Activated CD4-positive, alpha-beta memory T cell treated with anti-CD3 and anti-CD28 coated beads for 36 hours (primary cell): ENCODE measurements at regions of chr2 and their contacts with region 1.

Region 1: GRCh38 chr2:201118121-201118960 is 2.4 kb downstream of the CFLAR start:
- DNase-seq: peak; percentile 93
- H3K4me3 Mint-ChIP-seq: peak overlapping the region; percentile 99
- H3K27ac Mint-ChIP-seq: peak overlapping the region; percentile 97
- H3K4me1 Mint-ChIP-seq: peaks cover 37% of the 10 kb centered on the region
- H3K27me3 Mint-ChIP-seq: no peaks in the 10 kb centered on the region

Region 2: DNA sequence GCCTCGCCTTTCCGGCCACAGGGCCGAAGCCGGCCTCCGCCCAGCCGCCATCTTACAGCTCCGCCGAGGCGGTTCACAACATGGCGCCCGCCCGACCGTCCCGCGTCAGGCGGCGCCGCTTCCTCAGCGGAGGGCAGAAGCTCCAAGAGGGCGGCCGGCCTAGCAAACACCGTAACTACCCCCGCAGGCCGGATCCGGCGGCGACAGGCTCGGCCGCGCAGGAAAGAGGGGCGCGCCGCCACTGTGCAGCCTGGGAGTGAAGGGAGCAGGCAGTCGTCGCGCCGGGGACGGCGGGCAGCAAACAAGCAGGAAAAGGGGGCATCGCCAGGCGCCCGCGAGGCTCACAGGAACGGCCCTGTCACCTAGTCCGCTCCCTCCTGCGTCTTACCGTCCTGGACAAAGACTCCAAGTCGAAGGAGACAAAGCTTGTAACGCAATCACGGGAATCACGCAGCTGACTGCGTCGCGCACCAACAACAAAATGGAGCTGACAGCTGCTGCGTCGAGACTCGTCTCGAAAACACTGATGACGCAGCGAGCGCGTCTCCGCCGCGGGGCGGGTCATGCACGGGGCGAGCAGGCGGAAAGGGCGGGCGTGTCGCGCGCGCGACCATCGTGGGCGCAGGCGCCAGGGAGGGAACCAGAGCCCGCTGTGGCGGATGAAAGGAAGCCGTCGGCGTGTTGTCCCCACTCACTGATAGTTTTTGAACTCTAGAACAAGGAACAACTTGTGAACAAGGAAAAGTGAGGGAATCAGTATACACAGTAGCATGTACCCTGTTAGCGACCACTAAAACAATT is 254.0 kb before region 1 on chr2 and contains the start of gene CLK1:
- CTCF ChIA-PET with region 1: no interaction called
- POLR2A ChIA-PET with region 1: interaction called, 49 read pairs
- intact Hi-C with region 1: loop called (anchors 2 kb)
- DNase-seq: peak; percentile 98
- H3K4me3 Mint-ChIP-seq: peak within 1 kb of the TSS; percentile 87
- H3K27ac Mint-ChIP-seq: peak within 1 kb of the TSS; percentile 100
- H3K4me1 Mint-ChIP-seq: peaks cover 36% of the 10 kb centered on the region
- H3K27me3 Mint-ChIP-seq: no peaks in the 10 kb centered on the region
- total RNA-seq, gene CLK1: 112 to 114 TPM

Region 3: DNA sequence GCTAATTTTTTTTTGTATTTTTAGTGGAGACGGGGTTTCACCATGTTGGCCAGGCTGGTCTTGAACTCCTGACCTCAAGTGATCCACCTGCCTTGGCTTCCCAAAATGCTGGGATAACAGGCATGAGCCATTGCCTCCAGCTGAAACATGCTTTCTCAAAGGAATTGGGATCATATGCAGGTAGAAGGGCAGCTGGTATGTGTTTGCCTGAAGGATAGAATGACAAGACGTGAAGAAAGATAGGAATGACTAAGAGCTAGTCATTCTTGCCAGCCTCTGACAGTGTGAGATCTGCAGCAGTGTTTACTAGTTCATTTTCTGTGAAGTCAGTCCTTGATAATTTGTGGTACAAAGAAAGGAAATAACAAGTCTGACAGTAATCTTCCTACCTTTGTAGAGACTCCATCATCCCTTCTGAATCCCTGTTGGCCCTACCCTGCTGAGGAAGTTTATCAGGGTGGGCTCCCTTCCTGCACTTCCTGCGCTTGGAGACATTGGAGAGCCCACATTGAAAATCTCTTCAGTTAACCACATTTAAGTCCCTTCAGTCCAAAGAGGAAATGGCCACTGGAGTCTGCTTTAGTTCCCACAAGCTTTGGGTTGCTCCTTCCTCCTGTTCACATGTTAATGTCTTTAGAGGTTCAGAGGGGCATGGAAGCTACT is 12.3 kb after region 1 on chr2:
- CTCF ChIA-PET with region 1: interaction called, 12 read pairs
- POLR2A ChIA-PET with region 1: interaction called, 3 read pairs
- intact Hi-C with region 1: loop called (anchors 1 kb)
- DNase-seq: peak; percentile 55
- H3K4me3 Mint-ChIP-seq: peak overlapping the region; percentile 92
- H3K27ac Mint-ChIP-seq: peak overlapping the region; percentile 94
- H3K4me1 Mint-ChIP-seq: peaks cover 54% of the 10 kb centered on the region
- H3K27me3 Mint-ChIP-seq: no peaks in the 10 kb centered on the region

Region 4: GRCh38 chr2:201151127-201151981 is 33.0 kb after region 1 on chr2:
- CTCF ChIA-PET with region 1: interaction called, 9 read pairs
- POLR2A ChIA-PET with region 1: interaction called, 4 read pairs
- intact Hi-C with region 1: loop called (anchors 2 kb)
- DNase-seq: no peak
- H3K4me3 Mint-ChIP-seq: peak overlapping the region; percentile 25
- H3K27ac Mint-ChIP-seq: peak overlapping the region; percentile 81
- H3K4me1 Mint-ChIP-seq: peaks cover 43% of the 10 kb centered on the region
- H3K27me3 Mint-ChIP-seq: no peaks in the 10 kb centered on the region

Region 5: GRCh38 chr2:201158111-201158929 is 40.0 kb after region 1 on chr2:
- CTCF ChIA-PET with region 1: interaction called, 7 read pairs
- POLR2A ChIA-PET with region 1: interaction called, 4 read pairs
- intact Hi-C with region 1: loop called (anchors 1 kb)
- DNase-seq: peak; percentile 50
- H3K4me3 Mint-ChIP-seq: no peak overlapping the region
- H3K27ac Mint-ChIP-seq: peak overlapping the region; percentile 75
- H3K4me1 Mint-ChIP-seq: peaks cover 26% of the 10 kb centered on the region
- H3K27me3 Mint-ChIP-seq: no peaks in the 10 kb centered on the region

Region 6: DNA sequence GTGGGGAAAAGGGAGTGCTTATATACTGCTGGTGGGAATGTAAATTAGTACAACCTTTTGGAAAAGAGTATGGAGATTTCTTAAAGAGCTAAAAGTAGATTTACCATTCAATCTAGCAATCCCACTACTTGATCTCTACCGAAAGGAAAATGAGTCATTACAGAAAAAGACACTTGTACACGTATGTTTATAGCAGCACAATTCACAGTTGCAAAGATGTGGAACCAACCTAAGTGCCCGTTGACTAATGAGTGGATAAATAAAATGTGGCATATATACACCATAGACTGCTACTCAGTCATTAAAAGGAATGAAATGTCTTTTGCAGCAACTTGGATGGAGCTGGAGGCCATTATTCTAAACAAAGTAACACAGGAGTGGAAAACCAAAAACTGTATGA is 209.3 kb after region 1 on chr2:
- CTCF ChIA-PET with region 1: no interaction called
- POLR2A ChIA-PET with region 1: no interaction called
- intact Hi-C with region 1: no loop called
- DNase-seq: no peak
- H3K4me3 Mint-ChIP-seq: no peak overlapping the region
- H3K27ac Mint-ChIP-seq: no peak overlapping the region
- H3K4me1 Mint-ChIP-seq: peaks cover 7% of the 10 kb centered on the region
- H3K27me3 Mint-ChIP-seq: no peaks in the 10 kb centered on the region

Region 7: DNA sequence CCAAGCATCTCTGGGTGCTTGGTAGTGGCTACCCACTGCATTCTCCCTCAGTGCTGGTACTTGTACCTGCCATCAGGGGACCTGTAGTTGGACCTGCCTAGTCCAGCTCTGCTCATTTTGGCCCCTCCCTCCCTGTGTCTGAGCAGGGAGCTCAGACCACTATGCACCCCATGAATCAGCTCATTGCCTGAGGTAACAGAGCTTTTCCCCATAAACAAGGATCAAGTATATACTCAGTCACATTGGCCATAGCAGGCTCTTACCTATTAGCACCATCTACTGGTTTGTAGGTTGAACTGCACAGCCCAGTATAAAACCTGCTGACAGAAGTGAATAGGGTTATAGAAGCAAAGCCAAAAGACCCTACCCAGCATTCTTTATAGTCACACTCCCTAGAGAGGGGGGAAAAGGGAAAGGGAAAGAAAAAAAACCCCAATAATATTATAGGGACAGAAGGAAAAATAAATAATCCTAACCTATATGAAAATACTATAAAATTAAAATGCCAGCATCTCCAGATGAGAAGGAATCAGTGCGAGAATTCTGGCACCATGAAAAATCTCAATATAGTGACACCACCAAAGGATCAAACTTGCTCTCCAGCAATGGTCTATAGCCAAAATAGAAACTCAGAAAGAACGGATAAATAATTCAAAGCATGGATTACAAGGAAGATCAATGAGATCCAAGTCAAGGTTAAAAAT is 245.7 kb after region 1 on chr2:
- CTCF ChIA-PET with region 1: no interaction called
- POLR2A ChIA-PET with region 1: no interaction called
- intact Hi-C with region 1: no loop called
- DNase-seq: peak; percentile 32
- H3K4me3 Mint-ChIP-seq: no peak overlapping the region
- H3K27ac Mint-ChIP-seq: no peak overlapping the region
- H3K4me1 Mint-ChIP-seq: peaks cover 24% of the 10 kb centered on the region
- H3K27me3 Mint-ChIP-seq: no peaks in the 10 kb centered on the region

Region 8: DNA sequence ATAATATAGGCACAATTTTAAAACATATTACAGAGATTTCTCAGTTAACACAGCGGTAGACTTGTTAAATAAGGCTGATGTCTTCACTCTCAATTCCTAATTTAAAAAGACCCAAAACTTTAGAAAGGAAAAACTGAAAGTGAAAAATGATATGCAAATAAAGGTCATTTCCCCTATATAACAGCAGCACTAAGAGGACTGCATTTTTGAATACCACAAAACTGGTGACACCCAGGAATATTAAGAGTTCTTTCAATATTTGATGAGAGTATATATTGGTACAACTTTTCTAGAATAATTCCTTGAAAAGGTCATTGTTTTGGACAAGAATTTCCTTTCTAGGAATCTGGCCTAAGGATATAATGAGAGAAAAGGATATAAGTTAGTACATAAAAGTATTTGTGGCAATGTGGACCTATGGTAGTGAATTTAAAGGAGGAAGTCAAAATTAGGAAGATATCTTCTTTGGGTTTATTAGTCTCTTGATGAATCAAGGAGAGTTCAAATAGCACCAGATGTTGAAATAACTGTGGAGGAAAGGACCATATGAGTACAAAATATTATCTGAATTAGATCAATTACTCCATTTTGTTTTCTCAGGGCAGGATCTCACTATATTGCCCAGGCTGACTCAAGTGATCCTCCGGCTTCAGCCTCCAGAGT is 454.6 kb after region 1 on chr2:
- CTCF ChIA-PET with region 1: no interaction called
- POLR2A ChIA-PET with region 1: no interaction called
- intact Hi-C with region 1: no loop called
- DNase-seq: no peak
- H3K4me3 Mint-ChIP-seq: no peak overlapping the region
- H3K27ac Mint-ChIP-seq: no peak overlapping the region
- H3K4me1 Mint-ChIP-seq: no peaks in the 10 kb centered on the region
- H3K27me3 Mint-ChIP-seq: no peaks in the 10 kb centered on the region

Region 9: DNA sequence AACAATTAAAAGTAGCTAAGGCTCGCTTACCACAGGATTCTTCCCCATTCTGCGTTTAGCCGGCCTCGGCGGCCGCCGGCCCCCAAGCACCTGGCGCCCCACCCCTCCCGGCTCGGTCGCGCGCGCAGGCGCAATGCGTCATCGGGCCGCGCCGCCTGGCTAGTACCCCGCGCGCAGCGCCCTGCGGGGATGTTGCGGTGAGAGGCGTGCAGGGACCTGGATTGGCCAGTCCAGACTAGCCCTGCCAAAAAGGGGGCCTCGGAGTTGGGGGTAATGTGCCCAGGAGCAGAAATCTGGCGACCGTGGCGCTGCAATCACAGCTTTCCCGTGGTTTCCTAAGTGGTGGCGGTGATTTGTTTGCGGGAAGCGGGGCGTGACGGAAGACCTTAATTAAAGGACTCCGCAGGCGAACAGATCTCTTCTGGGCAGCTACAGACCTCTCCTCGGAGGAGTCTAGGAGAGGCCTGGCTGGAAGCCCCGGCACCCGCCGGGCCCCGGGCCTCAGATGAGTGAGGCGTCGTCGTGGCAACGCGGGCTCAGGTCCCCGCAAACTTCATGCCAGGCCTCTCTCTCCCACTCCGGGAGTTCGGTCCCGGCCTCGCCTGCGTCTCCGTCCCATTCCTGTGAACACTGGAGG is 524.4 kb after region 1 on chr2:
- CTCF ChIA-PET with region 1: no interaction called
- POLR2A ChIA-PET with region 1: no interaction called
- intact Hi-C with region 1: loop called (anchors 10 kb)
- DNase-seq: peak; percentile 89
- H3K4me3 Mint-ChIP-seq: peak overlapping the region; percentile 87
- H3K27ac Mint-ChIP-seq: peak overlapping the region; percentile 84
- H3K4me1 Mint-ChIP-seq: peaks cover 10% of the 10 kb centered on the region
- H3K27me3 Mint-ChIP-seq: no peaks in the 10 kb centered on the region